Right cardiac atrium (tissue), 5 donors: ENCODE measurements at regions of chr9 and their contacts with region 1.

Region 1: GRCh38 chr9:130701056-130702022 is 7.8 kb downstream of the EXOSC2 start:
- DNase-seq: peak; percentile 86 to 91 (median 90)
- ATAC-seq: peak; percentile 93 to 94
- H3K4me3 ChIP-seq: no peak overlapping the region
- H3K27ac ChIP-seq: no peak overlapping the region
- H3K4me1 ChIP-seq: peaks cover 2% of the 10 kb centered on the region
- H3K27me3 ChIP-seq: no peaks in the 10 kb centered on the region

Region 2: GRCh38 chr9:130860458-130861316 is 159.3 kb after region 1 on chr9:
- intact Hi-C with region 1: loop called in 3 of 4 experiments (anchors 5 kb)
- DNase-seq: peak; percentile 91 to 93 (median 91)
- ATAC-seq: peak; percentile 95 to 96
- H3K4me3 ChIP-seq: no peak overlapping the region
- H3K27ac ChIP-seq: peak overlapping the region; percentile 88
- H3K4me1 ChIP-seq: peaks cover 12% of the 10 kb centered on the region
- H3K27me3 ChIP-seq: no peaks in the 10 kb centered on the region

Region 3: DNA sequence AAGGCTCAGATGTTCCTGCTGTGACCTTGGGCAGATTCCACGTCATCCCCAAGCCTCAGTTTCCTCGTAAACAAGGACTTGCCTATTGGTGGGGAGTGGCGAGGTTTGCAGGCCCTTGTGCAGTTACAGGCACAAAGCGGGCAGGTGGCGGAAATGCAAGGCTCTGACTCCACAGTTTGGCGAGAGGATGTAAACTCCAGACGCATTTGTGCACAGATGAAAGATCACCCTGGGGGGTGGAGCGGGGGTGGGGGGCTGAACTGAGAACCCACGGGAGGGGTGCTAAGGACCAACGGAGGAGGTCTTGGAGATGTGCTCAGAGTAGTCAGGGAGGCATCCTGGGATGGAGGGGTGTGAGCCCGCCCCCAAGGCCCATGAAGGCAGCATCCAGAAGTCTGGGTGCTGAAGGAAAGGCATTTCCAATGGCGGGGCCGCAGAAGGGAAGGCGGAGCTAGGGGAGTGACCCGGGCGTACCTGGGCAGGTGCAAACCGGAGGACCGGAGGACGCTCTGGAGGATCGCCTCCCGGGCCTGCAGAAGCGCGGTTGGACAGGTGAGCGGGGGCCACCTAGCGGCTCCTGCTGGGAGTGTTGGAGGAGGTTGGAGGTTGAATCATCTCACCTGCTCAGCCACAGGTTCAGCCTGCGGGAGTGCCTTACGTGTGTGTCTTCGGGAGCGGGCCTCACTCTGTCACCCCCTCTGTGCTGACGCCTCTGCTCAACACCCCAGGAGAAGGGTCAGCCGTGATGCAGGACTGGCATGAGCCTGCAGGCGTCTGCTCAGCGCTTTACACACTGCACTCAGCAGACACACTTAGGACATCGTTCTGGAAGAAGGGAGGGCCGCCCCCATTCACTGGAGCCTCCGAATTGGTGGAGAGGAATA is 239.6 kb after region 1 on chr9:
- intact Hi-C with region 1: loop called in 3 of 4 experiments (anchors 5 kb)
- DNase-seq: peak; percentile 49 to 86 (median 85)
- ATAC-seq: peak; percentile 67 to 74
- H3K4me3 ChIP-seq: no peak overlapping the region
- H3K27ac ChIP-seq: no peak overlapping the region
- H3K4me1 ChIP-seq: peaks cover 3% of the 10 kb centered on the region
- H3K27me3 ChIP-seq: no peaks in the 10 kb centered on the region

Region 4: DNA sequence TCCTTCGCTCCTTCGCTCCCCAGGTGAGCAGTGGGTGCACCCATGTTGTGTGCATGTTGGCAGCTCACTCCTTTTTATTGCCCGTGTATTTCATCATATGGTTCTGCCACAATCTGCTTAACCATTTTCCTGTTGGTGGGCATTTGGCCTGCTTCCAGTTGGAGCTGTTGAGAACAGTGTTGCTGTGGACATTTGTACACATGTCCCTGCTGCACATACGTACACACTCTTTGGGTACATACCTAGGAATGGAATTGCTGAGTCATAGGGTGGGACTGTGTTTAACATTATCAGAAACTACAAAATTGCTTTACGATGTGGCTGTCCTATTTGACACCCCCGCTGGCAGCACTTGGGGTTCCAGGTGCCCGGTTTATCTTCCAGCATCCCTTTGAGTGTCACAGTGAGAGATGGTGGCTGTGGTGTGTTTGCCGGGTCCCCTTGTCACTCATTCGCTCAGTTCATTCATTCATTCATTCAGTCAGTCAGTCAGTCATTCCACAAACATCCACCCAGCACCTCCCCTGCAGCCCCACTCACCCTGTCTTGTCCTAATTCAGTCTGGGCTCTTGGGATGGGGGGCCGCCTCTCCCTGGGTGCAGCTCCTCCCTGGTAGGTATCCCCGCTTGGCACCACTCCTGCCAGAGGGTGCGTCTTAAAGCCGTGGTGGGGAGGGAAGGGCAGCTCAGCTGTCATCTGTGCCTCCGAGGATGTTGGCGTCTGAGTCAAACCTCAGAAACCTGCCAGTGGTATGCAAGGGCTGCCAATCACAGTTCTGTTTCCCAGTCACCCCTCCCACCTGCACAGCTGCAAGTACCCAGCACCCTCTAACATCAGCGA is 245.7 kb after region 1 on chr9:
- intact Hi-C with region 1: loop called in 3 of 4 experiments (anchors 5 kb)
- DNase-seq: no peak
- ATAC-seq: no peak
- H3K4me3 ChIP-seq: no peak overlapping the region
- H3K27ac ChIP-seq: no peak overlapping the region
- H3K4me1 ChIP-seq: no peaks in the 10 kb centered on the region
- H3K27me3 ChIP-seq: no peaks in the 10 kb centered on the region

Region 5: GRCh38 chr9:130997925-130998596 is 296.7 kb after region 1 on chr9:
- intact Hi-C with region 1: loop called (anchors 5 kb)
- DNase-seq: peak; percentile 62 to 88 (median 87)
- ATAC-seq: peak; percentile 66 to 83
- H3K4me3 ChIP-seq: no peak overlapping the region
- H3K27ac ChIP-seq: no peak overlapping the region
- H3K4me1 ChIP-seq: no peaks in the 10 kb centered on the region
- H3K27me3 ChIP-seq: no peaks in the 10 kb centered on the region

Region 6: DNA sequence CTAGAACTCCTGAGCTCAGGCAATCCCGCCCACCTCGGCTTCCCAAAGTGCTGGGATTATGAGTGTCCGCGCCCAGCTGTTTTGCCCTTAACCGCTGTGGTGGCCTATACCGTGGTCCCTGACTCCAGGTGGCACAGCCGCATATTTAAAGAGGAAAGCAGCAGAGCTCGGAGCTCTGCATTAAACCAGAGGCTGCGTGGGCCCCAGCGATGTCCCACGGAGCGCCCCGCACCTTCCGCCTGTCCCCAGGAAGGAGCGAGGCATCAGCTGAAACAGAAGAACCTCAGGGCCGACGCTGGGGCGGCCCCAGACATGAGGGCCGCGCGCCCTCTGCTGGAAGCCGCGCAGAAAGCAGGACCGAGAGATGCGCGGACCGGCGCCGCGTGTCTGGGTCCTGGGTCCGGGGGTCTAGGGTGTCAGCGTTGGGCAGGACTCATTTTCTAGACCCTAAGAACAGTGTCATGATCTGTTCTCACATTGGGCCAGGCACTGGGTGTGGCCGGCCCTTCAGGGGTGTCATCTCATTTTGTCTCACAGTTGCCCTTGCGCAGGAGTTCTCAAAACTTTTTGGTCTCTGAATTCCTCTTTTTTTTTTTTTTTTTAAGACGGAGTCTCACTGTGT is 345.4 kb after region 1 on chr9:
- intact Hi-C with region 1: loop called in 2 of 4 experiments (anchors 10 kb)
- DNase-seq: peak; percentile 73 to 90 (median 85)
- ATAC-seq: peak; percentile 77 to 84
- H3K4me3 ChIP-seq: no peak overlapping the region
- H3K27ac ChIP-seq: no peak overlapping the region
- H3K4me1 ChIP-seq: no peaks in the 10 kb centered on the region
- H3K27me3 ChIP-seq: no peaks in the 10 kb centered on the region